ENCODE measurements at regions of chr3 and their contacts with region 1.

Region 1: GRCh38 chr3:133426721-133427120 is 26.9 kb downstream of the BFSP2 start:
- DNase-seq: peak; percentile 24
- H3K4me3 Mint-ChIP-seq: no peak overlapping the region
- H3K27ac Mint-ChIP-seq: no peak overlapping the region
- H3K4me1 Mint-ChIP-seq: peaks cover 6% of the 10 kb centered on the region
- H3K27me3 Mint-ChIP-seq: no peaks in the 10 kb centered on the region

Region 2: DNA sequence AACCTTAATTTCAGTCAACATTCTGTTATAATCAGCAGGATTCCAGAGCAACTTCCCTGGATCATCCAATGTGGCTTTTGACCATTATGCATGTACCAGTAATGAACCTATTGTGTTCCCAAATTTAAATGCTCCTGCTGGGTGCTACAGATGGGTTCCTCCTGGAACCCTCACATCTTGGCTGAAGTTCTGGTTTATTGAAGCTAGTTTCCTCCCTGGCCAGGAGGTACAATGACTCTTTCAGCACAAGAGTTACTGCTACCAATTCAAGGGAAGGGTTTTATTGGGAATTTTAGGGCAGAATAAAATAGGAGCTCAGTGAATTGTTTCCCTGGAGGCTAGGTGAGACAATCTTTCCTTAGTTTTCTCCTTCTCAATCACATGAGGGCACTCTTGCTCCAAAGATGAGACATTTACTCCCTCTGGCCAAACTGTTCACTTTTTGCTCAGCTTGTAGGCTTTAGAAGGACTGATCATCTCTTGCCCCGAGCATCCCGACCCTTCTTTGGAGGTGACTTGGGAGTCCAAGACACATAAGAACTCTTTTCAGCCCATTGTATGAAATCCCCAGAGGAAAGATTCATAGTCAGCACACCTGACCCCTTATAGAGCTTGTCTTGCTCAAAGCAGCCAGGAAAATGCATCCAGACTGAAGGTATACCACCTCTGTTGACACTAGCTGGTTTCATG is 695.7 kb before region 1 on chr3:
- CTCF ChIA-PET with region 1: interaction called, 77 read pairs
- POLR2A ChIA-PET with region 1: interaction called, 3 read pairs
- intact Hi-C with region 1: loop called (anchors 1 kb)
- DNase-seq: no peak
- H3K4me3 Mint-ChIP-seq: no peak overlapping the region
- H3K27ac Mint-ChIP-seq: no peak overlapping the region
- H3K4me1 Mint-ChIP-seq: peaks cover 2% of the 10 kb centered on the region
- H3K27me3 Mint-ChIP-seq: peaks cover 16% of the 10 kb centered on the region

Region 3: DNA sequence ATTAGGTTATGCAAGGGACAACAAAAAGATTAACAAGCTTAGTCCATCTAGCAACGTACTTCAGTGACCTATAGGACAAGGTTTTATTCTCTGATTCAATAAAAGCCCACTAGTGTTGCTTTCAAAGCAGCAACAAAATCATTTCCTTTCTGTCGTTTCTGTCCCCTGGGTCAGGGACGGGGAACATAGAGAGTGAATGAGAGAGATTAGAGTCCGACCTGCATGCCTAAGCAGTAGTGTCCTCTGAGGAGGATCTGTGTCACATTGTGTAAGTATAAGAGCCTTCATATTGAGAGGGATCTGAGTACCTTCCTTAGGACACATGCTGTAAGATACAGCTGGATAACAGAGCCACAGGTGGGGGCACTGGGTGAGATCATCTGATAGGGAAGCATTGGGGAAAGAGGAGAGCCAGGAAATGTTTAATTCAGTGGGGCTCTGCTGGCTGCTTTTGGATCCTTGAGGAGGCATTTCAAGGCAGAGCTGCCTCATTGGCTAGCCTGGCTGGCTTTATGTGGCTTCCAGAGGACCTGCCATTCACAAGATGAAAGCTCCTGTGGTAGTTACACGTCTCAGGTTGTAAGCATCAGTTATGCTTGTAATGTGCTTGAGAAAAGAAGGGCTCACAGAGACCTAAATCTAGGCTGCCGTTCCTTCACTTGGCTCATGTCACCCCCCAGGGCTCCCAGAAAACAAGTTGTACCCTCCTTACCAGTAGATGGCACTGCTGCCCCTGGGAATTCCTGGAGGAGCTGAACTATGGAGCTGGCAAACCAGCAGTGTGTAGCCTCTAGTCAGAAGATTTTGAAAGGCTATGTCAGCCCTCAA is 385.8 kb before region 1 on chr3:
- CTCF ChIA-PET with region 1: interaction called, 7 read pairs
- POLR2A ChIA-PET with region 1: no interaction called
- intact Hi-C with region 1: loop called (anchors 1 kb)
- DNase-seq: peak; percentile 58
- H3K4me3 Mint-ChIP-seq: no peak overlapping the region
- H3K27ac Mint-ChIP-seq: no peak overlapping the region
- H3K4me1 Mint-ChIP-seq: peaks cover 5% of the 10 kb centered on the region
- H3K27me3 Mint-ChIP-seq: peaks cover 37% of the 10 kb centered on the region

Region 4: DNA sequence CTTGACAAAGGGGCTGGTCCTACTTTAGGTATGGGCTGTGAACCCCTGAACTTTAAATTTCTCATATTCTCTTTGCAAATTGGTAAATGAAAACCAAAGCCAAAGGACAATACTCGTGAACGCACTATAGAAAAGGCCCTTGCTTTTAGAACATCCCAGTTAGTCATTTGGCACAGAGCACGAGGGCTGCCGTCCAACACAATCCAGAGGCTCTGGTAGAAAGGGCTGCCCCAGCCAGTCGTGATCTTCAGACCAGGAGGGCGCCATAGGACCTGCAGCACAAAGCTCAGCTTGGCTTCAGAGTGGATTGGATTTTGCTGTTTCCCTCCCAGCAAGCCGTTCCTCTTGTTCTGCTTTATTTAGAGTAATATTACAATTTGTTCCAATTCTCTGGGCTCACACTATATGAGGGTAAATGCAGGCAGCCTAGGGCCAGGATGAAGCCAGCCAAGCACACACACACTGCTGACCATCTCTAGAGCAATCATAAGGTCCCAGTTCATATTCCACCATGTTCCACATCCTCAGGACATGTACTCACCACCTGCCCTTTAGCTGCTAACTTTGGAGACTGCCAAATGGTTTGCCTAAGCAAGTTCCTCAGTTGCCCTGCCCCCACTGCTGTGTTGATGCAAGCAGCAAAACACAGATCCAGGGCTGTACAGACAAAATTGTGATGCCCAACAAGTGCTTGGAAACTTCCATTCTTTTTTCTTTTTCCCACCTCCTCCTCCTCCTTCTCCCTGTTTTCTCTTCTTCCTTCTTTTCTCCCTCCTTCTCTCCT is 32.8 kb before region 1 on chr3:
- CTCF ChIA-PET with region 1: no interaction called
- POLR2A ChIA-PET with region 1: no interaction called
- intact Hi-C with region 1: no loop called
- DNase-seq: no peak
- H3K4me3 Mint-ChIP-seq: no peak overlapping the region
- H3K27ac Mint-ChIP-seq: no peak overlapping the region
- H3K4me1 Mint-ChIP-seq: no peaks in the 10 kb centered on the region
- H3K27me3 Mint-ChIP-seq: no peaks in the 10 kb centered on the region

Region 5: GRCh38 chr3:133505813-133506212 is 79.1 kb after region 1 on chr3:
- CTCF ChIA-PET with region 1: no interaction called
- POLR2A ChIA-PET with region 1: no interaction called
- intact Hi-C with region 1: no loop called
- DNase-seq: no peak
- H3K4me3 Mint-ChIP-seq: peak overlapping the region; percentile 67
- H3K27ac Mint-ChIP-seq: peak overlapping the region; percentile 77
- H3K4me1 Mint-ChIP-seq: peaks cover 15% of the 10 kb centered on the region
- H3K27me3 Mint-ChIP-seq: no peaks in the 10 kb centered on the region

Measured in activated CD4-positive, alpha-beta memory T cell treated with anti-CD3 and anti-CD28 coated beads for 36 hours (primary cell).